HEK293T (cell line): ENCODE measurements at regions of chr1 and their contacts with region 1.

Region 1: GRCh38 chr1:1846386-1846918 is 44.4 kb downstream of the GNB1 start:
- DNase-seq: no peak

Region 2: GRCh38 chr1:1890506-1891348 is 44.3 kb after region 1 on chr1 and contains the start of gene GNB1:
- CTCF ChIA-PET with region 1: interaction called, 10 read pairs
- POLR2A ChIA-PET with region 1: no interaction called
- DNase-seq: peak; percentile 94

Region 3: DNA sequence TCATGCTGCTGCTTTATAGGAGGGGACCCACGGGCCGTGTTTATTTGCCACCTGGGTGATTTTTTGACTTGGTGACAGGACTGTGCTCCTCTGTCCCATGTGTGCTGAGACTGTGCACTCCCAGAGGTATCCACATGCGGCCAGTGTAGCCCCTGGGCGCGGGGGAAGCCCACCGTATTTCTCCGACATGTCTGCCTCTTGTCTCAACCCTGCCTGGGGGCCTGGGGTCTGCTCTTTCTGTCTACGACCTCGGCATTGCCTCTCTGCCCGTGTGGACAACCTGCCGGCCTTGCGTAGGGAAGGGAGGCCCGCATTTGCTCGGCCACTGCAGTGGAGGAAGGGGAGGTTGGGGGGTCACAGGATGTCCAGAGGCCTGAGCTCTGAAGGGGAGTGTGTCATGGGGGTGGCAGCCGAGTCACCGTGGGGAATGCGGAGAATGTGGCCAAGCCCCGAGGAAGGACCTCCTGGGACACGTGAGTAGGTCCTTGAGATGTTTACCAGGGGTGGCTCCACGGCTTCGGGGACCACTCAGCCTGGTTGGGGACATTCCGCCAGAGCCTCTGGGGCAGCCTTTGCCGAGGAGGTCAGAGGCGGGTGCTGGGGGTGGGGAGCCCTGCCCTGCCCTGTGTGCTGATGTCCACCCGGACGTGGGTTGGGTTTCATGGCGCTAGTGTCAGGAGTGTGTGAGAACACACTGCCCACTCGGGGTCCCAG is 214.8 kb after region 1 on chr1:
- CTCF ChIA-PET with region 1: no interaction called
- POLR2A ChIA-PET with region 1: no interaction called
- DNase-seq: no peak

Region 4: GRCh38 chr1:2132222-2133038 is 286.0 kb after region 1 on chr1:
- CTCF ChIA-PET with region 1: no interaction called
- POLR2A ChIA-PET with region 1: no interaction called
- DNase-seq: peak; percentile 47